ENCODE measurements at regions of chr5 and their contacts with region 1.

Region 1: DNA sequence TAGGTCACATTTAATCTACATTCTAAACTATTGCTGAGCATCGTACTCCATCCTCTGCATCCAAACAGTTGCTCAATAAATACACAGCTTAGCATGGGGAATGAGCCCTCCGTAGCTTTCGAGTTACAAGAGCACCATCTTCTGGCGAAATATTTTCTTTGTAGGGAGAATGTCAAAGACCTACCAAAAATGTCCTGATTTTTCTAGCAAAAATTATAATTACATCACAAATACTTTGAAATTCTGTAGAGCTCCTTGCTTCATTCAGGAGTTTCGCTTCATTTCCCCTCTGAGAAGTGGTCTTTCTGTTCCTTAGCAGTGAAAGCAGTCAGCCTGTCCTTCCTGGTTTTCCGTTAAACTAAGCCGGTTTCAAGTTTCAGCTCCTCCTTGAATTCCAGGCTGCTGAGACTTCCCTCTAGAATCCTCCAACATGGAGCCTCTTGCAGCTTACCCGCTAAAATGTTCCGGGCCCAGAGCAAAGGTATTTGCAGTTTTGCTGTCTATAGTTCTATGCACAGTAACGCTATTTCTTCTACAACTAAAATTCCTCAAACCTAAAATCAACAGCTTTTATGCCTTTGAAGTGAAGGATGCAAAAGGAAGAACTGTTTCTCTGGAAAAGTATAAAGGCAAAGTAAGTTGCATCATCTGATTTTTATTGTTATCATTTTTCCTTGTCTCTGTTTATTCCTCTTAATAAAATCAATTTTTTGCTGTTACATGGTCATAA is at the start of gene GPX8:
- DNase-seq: peak in 3 of 6 donors; percentile 9 to 45 (median 44)
- ATAC-seq: peak; percentile 89 to 92 (median 90)
- H3K4me3 ChIP-seq: peak within 1 kb of the TSS; percentile 8 to 41 (median 29)
- H3K27ac ChIP-seq: peak within 1 kb of the TSS in 2 of 4 donors; percentile 24 to 48
- H3K4me1 ChIP-seq: peaks cover 0 to 3% (median 0%) of the 10 kb centered on the region in 3 donors
- H3K27me3 ChIP-seq: no peaks in the 10 kb centered on the region
- CTCF ChIP-seq: peak in 3 of 4 donors; percentile 21 to 35 (median 31)
- total RNA-seq, gene GPX8: 2.8 to 13.4 (median 6.9) TPM

Region 2: DNA sequence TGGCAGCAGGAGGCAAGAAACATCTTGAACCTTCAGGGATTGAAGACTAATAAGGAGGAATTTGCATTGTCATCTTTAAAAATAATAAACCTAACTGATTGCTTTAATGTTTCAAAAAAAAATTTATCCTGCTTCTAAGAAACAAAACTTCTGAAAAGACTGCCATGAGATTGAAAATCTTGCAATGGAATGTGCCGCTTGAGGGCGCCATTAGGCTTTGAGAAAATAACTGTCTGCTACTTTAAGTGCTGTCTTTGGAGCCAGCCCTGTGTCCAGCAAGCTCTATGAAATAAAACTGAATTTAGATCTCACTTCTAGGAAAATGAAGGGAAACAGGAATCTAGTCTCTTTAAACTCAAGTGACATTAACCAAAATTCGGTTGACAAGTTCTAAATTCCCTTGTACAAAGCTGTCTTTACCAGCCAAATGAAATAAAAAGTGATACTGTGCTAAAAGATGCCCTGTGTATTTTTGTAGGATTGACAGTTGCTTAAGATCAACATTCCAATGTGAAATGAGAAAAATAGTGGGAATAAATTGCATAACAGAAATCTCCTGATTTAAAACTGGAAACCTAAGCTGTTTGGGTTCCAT is 253.9 kb before region 1 on chr5:
- intact Hi-C with region 1: loop called in 1 of 3 experiments (anchors 10 kb)
- DNase-seq: peak in 5 of 6 donors; percentile 16 to 74 (median 39)
- ATAC-seq: peak in 3 of 4 donors; percentile 34 to 76 (median 62)
- H3K4me3 ChIP-seq: no peak overlapping the region
- H3K27ac ChIP-seq: no peak overlapping the region
- H3K4me1 ChIP-seq: no peaks in the 10 kb centered on the region
- H3K27me3 ChIP-seq: no peaks in the 10 kb centered on the region
- CTCF ChIP-seq: peak; percentile 10 to 44 (median 32)

Region 3: DNA sequence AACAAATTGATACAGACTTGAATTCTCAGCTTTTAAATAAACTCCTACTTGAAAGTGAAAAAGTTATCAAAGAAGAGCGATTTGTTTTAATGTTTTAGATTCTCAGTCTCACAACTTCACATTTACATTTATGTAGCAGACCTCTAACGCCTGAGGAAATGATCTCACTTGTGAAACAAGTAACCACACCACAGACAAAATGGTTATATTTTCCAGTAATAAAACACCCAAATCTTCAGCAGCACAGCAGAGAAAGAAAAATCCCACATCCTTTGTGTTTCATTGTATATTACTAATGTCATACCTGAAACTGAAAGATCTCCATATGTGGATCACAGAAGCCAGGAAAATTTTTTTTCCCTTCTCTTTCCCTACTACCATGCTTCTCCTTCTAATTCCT is 87.3 kb before region 1 on chr5:
- intact Hi-C with region 1: no loop called
- DNase-seq: no peak
- ATAC-seq: no peak
- H3K4me3 ChIP-seq: no peak overlapping the region
- H3K27ac ChIP-seq: no peak overlapping the region
- H3K4me1 ChIP-seq: no peaks in the 10 kb centered on the region
- H3K27me3 ChIP-seq: no peaks in the 10 kb centered on the region
- CTCF ChIP-seq: no peak